ENCODE measurements at regions of chr1 and their contacts with region 1.

Region 1: GRCh38 chr1:72230746-72231145 is 51.6 kb downstream of the NEGR1 start:
- DNase-seq: no peak
- H3K4me3 ChIP-seq: no peak overlapping the region
- H3K27ac ChIP-seq: peak overlapping the region in 2 of 4 donors; percentile 44 to 47
- H3K4me1 ChIP-seq: peaks cover 0 to 54% (median 21%) of the 10 kb centered on the region in 4 donors
- H3K27me3 ChIP-seq: no peaks in the 10 kb centered on the region
- CTCF ChIP-seq: no peak
- EP300 ChIP-seq: no peak
- POLR2A ChIP-seq: no peak

Region 2: GRCh38 chr1:72137656-72138055 is 93.1 kb before region 1 on chr1:
- intact Hi-C with region 1: no loop called
- DNase-seq: no peak
- H3K4me3 ChIP-seq: no peak overlapping the region
- H3K27ac ChIP-seq: no peak overlapping the region
- H3K4me1 ChIP-seq: no peaks in the 10 kb centered on the region
- H3K27me3 ChIP-seq: no peaks in the 10 kb centered on the region
- CTCF ChIP-seq: no peak
- EP300 ChIP-seq: no peak
- POLR2A ChIP-seq: no peak

Region 3: GRCh38 chr1:72150508-72150907 is 80.2 kb before region 1 on chr1:
- intact Hi-C with region 1: no loop called
- DNase-seq: no peak
- H3K4me3 ChIP-seq: no peak overlapping the region
- H3K27ac ChIP-seq: no peak overlapping the region
- H3K4me1 ChIP-seq: peaks cover 0 to 3% (median 0%) of the 10 kb centered on the region in 4 donors
- H3K27me3 ChIP-seq: no peaks in the 10 kb centered on the region
- CTCF ChIP-seq: no peak
- EP300 ChIP-seq: no peak
- POLR2A ChIP-seq: no peak

Region 4: GRCh38 chr1:72166426-72166825 is 64.3 kb before region 1 on chr1:
- intact Hi-C with region 1: no loop called
- DNase-seq: no peak
- H3K4me3 ChIP-seq: no peak overlapping the region
- H3K27ac ChIP-seq: no peak overlapping the region
- H3K4me1 ChIP-seq: peaks cover 0 to 7% (median 3%) of the 10 kb centered on the region in 4 donors
- H3K27me3 ChIP-seq: no peaks in the 10 kb centered on the region
- CTCF ChIP-seq: no peak
- EP300 ChIP-seq: no peak
- POLR2A ChIP-seq: no peak

Region 5: DNA sequence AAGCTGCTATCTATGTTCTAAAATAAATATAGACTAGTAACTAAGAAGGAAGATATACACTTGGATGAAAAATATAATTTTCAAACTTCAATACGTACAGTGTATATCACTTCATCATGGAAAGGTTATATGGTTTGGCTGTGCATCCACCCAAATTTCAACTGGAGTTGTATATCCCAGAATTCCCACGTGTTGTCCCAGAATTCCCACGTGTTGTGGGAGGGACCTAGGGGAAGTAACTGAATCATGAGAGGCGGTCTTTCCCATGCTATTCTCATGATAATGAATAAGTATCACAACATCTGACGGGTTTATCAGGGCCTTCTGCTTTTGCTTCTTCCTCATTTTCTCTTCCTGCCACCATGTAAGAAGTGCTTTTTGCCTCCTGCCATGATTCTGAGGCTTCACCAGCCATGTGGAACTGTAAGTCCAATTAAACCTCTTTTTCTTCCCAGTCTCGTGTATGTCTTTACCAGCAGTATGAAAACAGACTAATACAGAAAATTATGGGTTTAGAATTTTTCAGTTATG is 40.9 kb after region 1 on chr1:
- intact Hi-C with region 1: loop called (anchors 5 kb)
- DNase-seq: no peak
- H3K4me3 ChIP-seq: no peak overlapping the region
- H3K27ac ChIP-seq: no peak overlapping the region
- H3K4me1 ChIP-seq: peaks cover 0 to 20% (median 4%) of the 10 kb centered on the region in 4 donors
- H3K27me3 ChIP-seq: no peaks in the 10 kb centered on the region
- CTCF ChIP-seq: no peak
- EP300 ChIP-seq: no peak
- POLR2A ChIP-seq: no peak